ENCODE measurements at regions of chr6 and their contacts with region 1.

Region 1: GRCh38 chr6:150079604-150080003 is 10.7 kb upstream of the ULBP3 start:
- DNase-seq: peak in 1 of 2 donors; percentile 16
- H3K4me3 ChIP-seq: no peak overlapping the region
- H3K27ac ChIP-seq: no peak overlapping the region
- H3K4me1 ChIP-seq: no peaks in the 10 kb centered on the region
- H3K27me3 ChIP-seq: peaks cover 0 to 25% of the 10 kb centered on the region in 2 donors
- CTCF ChIP-seq: no peak

Region 2: GRCh38 chr6:149648148-149649145 is 431.2 kb before region 1 on chr6 and contains the start of gene KATNA1:
- intact Hi-C with region 1: no loop called
- DNase-seq: peak; percentile 66 to 89
- H3K4me3 ChIP-seq: peak within 1 kb of the TSS; percentile 89 to 92
- H3K27ac ChIP-seq: peak within 1 kb of the TSS; percentile 83 to 86
- H3K4me1 ChIP-seq: peaks cover 0 to 15% (median 5%) of the 10 kb centered on the region in 4 donors
- H3K27me3 ChIP-seq: no peaks in the 10 kb centered on the region
- CTCF ChIP-seq: no peak

Region 3: GRCh38 chr6:150334790-150335783 is 255.5 kb after region 1 on chr6:
- intact Hi-C with region 1: loop called (anchors 5 kb)
- DNase-seq: peak in 1 of 2 donors; percentile 38
- H3K4me3 ChIP-seq: no peak overlapping the region
- H3K27ac ChIP-seq: no peak overlapping the region
- H3K4me1 ChIP-seq: no peaks in the 10 kb centered on the region
- H3K27me3 ChIP-seq: no peaks in the 10 kb centered on the region
- CTCF ChIP-seq: peak; percentile 73 to 77

Region 4: DNA sequence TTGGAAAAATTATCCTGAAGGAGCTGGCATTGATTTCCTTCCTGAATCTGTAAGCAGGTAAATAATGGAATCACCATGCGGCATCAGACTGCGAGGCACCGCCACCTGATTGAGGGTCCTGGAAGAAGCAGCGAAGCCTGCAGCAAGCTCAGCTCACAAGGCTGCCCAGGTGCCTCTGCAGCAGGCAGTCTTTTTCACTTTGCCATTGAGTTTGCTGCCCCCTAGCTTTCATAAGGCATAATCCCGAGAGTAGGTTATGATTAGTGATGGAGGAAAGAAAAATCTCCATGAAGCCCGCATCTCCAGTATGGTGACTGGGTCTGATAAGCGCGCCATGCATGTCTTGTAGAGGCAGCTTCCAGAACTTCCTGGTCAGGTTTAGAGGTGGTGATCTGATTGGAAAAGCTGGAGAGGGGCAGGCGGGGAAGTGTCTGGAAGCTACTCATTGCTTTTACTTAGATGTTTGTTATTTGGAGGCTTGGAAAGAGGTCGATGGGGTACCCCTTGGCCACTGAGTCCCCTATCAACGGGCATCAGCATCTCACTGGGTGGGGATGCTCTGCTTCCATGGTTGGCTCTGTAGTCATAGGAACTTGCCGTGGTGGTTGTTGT is 315.9 kb after region 1 on chr6:
- intact Hi-C with region 1: loop called (anchors 5 kb)
- DNase-seq: peak in 1 of 2 donors; percentile 33
- H3K4me3 ChIP-seq: no peak overlapping the region
- H3K27ac ChIP-seq: no peak overlapping the region
- H3K4me1 ChIP-seq: no peaks in the 10 kb centered on the region
- H3K27me3 ChIP-seq: peaks cover 0 to 3% of the 10 kb centered on the region in 2 donors
- CTCF ChIP-seq: peak; percentile 57 to 60

Region 5: GRCh38 chr6:150813319-150813992 is 733.9 kb after region 1 on chr6:
- intact Hi-C with region 1: loop called (anchors 10 kb)
- DNase-seq: no peak
- H3K4me3 ChIP-seq: no peak overlapping the region
- H3K27ac ChIP-seq: no peak overlapping the region
- H3K4me1 ChIP-seq: peaks cover 0 to 9% (median 4%) of the 10 kb centered on the region in 4 donors
- H3K27me3 ChIP-seq: no peaks in the 10 kb centered on the region
- CTCF ChIP-seq: no peak